MCF 10A (cell line): ENCODE measurements at regions of chr5 and their contacts with region 1.

Region 1: GRCh38 chr5:32076699-32077695 is 97.1 kb downstream of the GOLPH3 start:
- DNase-seq: peak; percentile 70
- H3K4me3 Mint-ChIP-seq: no peak overlapping the region
- H3K27ac Mint-ChIP-seq: no peak overlapping the region
- H3K4me1 Mint-ChIP-seq: no peaks in the 10 kb centered on the region
- H3K27me3 Mint-ChIP-seq: no peaks in the 10 kb centered on the region
- CTCF ChIP-seq: peak; percentile 75

Region 2: DNA sequence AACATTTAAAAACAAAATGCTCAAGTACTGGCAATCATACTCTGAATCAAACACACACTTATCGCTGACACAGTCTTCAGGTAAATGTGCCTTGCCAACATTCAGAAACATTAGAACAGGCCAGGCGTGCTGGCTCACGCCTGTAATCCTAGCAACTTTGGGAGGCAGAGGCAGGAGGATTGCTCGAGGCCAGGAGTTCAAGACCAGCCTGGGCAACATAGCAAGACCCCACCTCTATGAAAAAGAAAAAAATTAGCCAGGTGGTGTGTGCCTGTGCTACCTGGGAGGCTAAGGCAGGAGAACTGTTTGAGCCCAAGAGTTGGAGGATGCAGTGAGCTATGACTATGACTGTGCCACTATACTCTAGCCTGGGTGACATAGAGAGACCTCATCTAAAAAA is 565.7 kb before region 1 on chr5:
- CTCF ChIA-PET with region 1: no interaction called
- POLR2A ChIA-PET with region 1: no interaction called
- intact Hi-C with region 1: no loop called
- DNase-seq: no peak
- H3K4me3 Mint-ChIP-seq: no peak overlapping the region
- H3K27ac Mint-ChIP-seq: no peak overlapping the region
- H3K4me1 Mint-ChIP-seq: no peaks in the 10 kb centered on the region
- H3K27me3 Mint-ChIP-seq: no peaks in the 10 kb centered on the region
- CTCF ChIP-seq: no peak

Region 3: DNA sequence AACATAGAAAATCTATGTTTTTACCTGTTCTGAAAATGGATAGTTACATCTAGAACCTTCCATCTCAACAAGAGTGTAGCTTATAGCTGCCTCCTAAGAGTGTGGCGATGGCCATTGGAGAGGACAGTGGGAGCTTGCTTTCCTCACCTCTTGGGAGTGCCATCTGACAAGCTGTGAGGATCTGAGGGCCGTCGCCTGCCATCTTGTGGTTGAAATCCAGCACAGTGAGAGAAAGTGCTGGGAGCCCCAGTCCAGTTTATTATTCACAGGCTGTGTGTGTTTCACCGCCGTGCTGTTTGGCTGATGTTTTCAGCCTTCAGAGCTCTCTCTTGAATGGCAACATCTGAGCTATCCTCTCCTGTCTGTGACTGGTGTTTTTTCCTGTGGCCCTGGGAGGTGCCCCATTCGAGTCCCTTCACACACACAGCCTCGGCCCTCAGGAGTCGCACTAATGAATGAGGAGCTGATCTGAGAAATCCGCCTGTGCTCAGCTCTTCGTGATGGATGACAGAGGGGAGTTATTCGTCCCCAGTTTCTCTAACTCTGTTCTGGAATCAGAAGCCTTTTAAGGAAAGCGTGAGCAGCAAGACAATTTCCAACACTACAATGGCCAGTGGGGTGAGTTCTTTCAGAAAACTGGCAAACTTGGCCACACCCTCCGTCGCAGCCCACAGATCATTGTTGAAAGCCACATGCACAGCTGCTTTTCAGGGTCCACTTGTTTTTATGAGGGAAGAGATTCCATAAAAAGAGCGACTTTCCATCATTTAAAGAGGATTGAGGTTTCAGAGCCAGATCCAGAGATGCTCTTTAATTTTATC is 267.7 kb before region 1 on chr5:
- CTCF ChIA-PET with region 1: interaction called, 12 read pairs
- POLR2A ChIA-PET with region 1: interaction called, 4 read pairs
- intact Hi-C with region 1: no loop called
- DNase-seq: peak; percentile 81
- H3K4me3 Mint-ChIP-seq: no peak overlapping the region
- H3K27ac Mint-ChIP-seq: no peak overlapping the region
- H3K4me1 Mint-ChIP-seq: peaks cover 6% of the 10 kb centered on the region
- H3K27me3 Mint-ChIP-seq: peaks cover 24% of the 10 kb centered on the region
- CTCF ChIP-seq: peak; percentile 79

Region 4: DNA sequence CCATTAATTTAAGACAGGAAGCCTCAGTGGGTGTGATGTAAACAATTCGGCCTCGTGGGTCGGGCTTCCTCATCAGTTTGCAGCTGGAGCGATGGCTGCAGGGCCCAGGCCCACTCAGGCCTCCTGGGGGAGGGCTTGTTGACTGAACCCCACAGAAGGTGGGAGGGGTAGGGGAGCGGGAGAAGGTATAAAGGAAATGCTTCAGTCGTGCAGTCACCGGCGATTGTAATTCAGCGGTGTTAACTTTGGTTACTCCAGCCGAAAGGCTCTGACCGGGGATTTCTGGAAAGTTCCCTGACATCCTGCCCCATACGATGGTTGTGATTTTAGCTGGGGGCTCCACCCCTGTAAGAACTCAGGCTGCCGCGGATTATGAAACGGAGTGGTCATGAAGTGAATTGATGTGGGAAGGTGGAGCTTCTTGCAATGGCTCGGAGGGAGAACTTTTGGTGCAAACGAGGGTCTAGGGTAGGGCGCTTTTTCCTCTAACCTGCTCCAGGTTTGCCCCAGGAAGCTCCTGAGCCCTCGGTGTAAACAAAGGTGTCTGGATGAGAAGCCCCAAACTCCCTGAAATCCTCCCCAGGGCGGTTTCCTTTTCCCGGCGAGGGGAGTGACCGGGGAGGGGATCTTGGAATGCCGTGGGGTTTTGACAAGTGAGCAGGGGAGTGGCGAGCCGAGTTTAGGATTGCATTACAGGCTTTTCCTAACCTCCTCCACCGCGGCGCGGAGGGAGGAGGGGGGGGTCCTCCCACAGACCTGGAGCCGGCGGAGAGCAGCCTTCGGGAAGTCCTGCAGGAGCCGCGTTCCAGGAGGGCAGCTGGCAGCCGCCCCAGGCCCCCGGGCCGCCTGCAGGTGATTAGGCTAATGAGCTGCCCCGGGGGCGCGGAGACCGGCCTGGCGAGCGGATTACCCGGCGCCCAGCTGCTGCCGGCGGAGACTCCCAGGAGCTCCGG is 222.5 kb before region 1 on chr5:
- CTCF ChIA-PET with region 1: interaction called, 23 read pairs
- POLR2A ChIA-PET with region 1: interaction called, 4 read pairs
- intact Hi-C with region 1: loop called (anchors 1 kb)
- DNase-seq: peak; percentile 69
- H3K4me3 Mint-ChIP-seq: peak overlapping the region; percentile 76
- H3K27ac Mint-ChIP-seq: peak overlapping the region; percentile 49
- H3K4me1 Mint-ChIP-seq: peaks cover 11% of the 10 kb centered on the region
- H3K27me3 Mint-ChIP-seq: no peaks in the 10 kb centered on the region
- CTCF ChIP-seq: no peak

Region 5: DNA sequence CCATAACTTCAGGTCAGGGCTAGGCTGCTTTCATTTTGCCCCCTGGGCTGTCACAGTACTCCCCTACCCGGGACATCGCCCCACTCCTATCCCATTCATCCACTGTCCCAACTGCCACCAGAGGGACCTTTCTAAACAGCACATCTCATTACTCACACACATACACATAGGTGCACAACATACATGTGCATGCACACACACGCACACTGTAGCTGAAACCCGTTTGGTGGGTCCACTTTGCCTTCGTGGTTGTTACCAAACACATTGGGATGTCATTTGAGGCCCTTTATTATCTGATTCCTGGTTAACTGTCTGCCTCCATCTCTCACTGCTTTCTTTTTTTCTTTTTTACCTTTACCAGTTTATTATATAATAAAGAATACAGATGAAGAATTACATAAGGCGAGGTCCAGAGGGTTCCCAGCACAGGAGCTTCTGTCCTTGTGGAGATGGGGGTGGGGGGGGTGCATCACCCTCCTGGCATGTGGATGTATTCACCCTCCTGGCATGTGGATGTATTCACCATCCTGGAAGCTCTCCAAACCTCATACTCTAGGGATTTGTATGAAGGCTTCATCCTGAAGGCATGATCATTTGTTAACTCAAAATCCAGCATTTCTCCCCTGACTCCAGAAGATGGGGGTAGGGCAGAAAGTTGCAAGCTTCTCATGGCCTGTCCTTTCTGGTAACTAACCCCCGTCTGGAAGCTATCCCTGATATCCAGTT is 88.8 kb before region 1 on chr5:
- CTCF ChIA-PET with region 1: interaction called, 10 read pairs
- POLR2A ChIA-PET with region 1: no interaction called
- intact Hi-C with region 1: no loop called
- DNase-seq: peak; percentile 98
- H3K4me3 Mint-ChIP-seq: no peak overlapping the region
- H3K27ac Mint-ChIP-seq: peak overlapping the region; percentile 20
- H3K4me1 Mint-ChIP-seq: peaks cover 36% of the 10 kb centered on the region
- H3K27me3 Mint-ChIP-seq: no peaks in the 10 kb centered on the region
- CTCF ChIP-seq: no peak

Region 6: GRCh38 chr5:32092938-32093812 is 16.2 kb after region 1 on chr5:
- CTCF ChIA-PET with region 1: interaction called, 20 read pairs
- POLR2A ChIA-PET with region 1: interaction called, 7 read pairs
- intact Hi-C with region 1: no loop called
- DNase-seq: peak; percentile 81
- H3K4me3 Mint-ChIP-seq: no peak overlapping the region
- H3K27ac Mint-ChIP-seq: peak overlapping the region; percentile 7
- H3K4me1 Mint-ChIP-seq: no peaks in the 10 kb centered on the region
- H3K27me3 Mint-ChIP-seq: no peaks in the 10 kb centered on the region
- CTCF ChIP-seq: peak; percentile 67

Region 7: DNA sequence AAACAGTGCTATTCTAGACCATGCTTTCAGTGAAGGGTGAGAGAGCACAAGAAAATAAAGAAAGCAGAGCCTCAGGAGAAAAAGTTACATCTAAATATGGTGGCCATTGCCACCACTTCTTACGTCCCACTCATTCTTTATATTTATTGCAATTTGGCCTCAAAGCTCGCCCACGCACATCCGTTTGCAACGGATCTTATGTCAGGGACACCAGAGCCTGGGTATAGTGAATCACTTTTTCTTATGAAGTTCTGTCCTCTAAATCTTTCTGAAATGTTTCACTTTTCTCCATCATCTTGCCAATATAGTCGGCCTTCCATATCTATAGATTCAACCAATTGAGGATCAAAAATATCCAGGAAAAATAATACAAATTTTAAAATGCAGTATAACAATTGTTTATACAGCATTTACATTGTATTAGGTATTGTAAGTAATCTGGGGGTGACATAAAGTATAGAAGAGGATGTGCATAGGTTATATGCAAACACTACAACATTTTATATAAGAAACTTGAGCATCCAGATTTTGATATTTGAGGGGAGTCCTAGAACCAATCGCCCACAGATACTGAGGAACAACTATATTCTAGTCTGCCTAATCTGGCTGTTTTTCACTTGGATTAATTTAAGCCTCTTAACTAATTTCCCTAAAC is 62.0 kb after region 1 on chr5:
- CTCF ChIA-PET with region 1: no interaction called
- POLR2A ChIA-PET with region 1: no interaction called
- intact Hi-C with region 1: no loop called
- DNase-seq: no peak
- H3K4me3 Mint-ChIP-seq: no peak overlapping the region
- H3K27ac Mint-ChIP-seq: no peak overlapping the region
- H3K4me1 Mint-ChIP-seq: no peaks in the 10 kb centered on the region
- H3K27me3 Mint-ChIP-seq: no peaks in the 10 kb centered on the region
- CTCF ChIP-seq: no peak